ENCODE measurements at regions of chr15 and their contacts with region 1.

Region 1: DNA sequence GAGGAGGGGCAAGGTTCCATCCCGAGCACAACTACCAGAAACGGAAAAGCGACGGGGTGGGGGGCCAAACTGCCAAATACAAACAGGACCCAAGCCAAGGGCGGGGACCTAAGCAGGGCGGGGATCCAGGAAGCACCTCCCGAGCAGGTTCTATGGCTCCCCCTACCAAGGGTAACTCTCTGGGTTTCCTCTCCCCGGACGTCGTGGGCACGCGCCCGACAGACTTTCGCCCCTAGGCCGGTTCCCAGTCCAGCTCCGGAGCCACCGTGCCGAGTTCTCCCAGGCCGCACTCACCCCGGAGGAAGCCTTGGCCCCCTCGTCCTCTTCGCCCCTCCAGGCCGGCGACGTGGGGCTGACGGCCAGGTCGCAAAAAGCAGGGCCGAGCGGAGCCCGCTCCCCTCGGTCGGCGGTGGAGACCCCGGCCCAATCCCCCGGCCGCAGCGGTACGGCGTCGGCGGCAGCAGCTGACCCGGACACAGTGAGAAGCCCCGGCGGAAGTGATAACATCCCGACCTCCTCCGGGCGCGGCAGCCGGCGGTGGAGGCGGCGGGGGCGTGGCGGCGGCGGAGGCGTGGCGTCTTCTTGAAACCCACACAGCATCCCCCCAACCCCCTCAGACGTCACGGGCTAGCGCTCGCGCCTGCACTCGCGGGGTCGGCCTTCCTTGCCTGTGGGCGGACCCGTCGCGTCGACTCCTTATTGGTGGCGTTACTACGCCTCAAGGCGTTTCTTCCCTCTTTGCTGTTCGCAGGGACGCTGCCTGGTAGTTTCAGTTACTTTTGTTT is at the start of gene BNIP2:
- DNase-seq: peak; percentile 97
- ATAC-seq: peak; percentile 87
- H3K4me3 Mint-ChIP-seq: peak within 1 kb of the TSS; percentile 92
- H3K27ac Mint-ChIP-seq: peak within 1 kb of the TSS; percentile 96
- H3K4me1 Mint-ChIP-seq: peaks cover 52% of the 10 kb centered on the region
- H3K27me3 Mint-ChIP-seq: no peaks in the 10 kb centered on the region
- CTCF ChIP-seq: no peak
- total RNA-seq, gene BNIP2: 80.1 and 82.9 TPM in 2 replicates

Region 2: DNA sequence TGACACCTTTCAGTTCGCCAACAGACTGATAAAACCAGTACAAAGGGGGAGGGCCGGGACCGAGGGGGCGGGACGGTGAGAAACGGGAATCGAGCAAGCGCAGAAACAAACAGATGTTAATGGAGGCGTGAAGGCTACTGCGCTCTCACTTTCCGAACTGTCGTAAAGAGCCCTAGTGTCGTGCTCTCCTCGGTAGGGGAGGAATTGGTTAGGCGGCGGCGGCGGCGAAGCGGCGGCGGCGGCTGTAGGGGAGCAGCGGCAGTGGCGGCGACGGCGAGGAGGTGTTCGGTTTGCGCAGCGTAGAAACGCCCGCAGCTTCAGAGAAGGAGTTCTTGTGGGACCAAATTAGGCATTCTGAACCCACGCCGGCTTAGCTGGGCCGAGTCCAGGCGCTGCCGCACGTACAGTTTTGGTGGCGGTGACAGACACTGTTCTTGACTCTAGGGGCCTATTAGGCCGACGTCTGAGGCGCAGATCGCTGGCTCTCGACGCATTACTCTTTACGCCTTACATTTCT is 701.5 kb before region 1 on chr15 and contains the start of gene RNF111:
- CTCF ChIA-PET with region 1: no interaction called
- POLR2A ChIA-PET with region 1: interaction called, 3 read pairs
- intact Hi-C with region 1: loop called (anchors 2 kb)
- DNase-seq: peak; percentile 78
- ATAC-seq: peak; percentile 91
- H3K4me3 Mint-ChIP-seq: peak within 1 kb of the TSS; percentile 95
- H3K27ac Mint-ChIP-seq: peak within 1 kb of the TSS; percentile 94
- H3K4me1 Mint-ChIP-seq: peaks cover 45% of the 10 kb centered on the region
- H3K27me3 Mint-ChIP-seq: no peaks in the 10 kb centered on the region
- CTCF ChIP-seq: no peak
- total RNA-seq, gene RNF111: 52.5 and 55.8 TPM in 2 replicates

Region 3: DNA sequence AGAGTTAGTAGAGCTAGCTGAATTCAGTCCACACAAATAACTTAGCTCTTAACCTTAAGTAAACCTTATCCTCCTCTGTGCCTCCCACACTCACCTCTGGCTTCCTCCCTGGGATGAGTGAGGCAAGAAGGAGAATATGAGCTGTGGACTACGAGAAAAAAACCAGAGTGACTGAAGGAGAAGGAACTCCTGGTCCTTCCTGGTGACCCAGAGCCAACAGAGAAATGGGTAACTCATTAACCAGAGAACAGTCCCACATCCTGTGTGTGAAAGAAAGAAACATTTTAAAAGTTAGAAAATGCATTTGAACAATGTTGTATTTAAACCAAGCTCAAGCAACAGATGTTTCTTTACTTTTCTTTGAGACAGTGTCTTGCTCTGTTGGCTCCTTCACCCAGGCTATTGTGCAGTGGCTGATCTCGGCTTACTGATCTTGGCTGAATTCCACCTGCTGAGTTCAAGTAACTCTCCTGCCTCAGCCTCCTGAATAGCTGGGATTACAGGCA is 278.6 kb before region 1 on chr15:
- CTCF ChIA-PET with region 1: no interaction called
- POLR2A ChIA-PET with region 1: no interaction called
- intact Hi-C with region 1: loop called (anchors 2 kb)
- DNase-seq: no peak
- ATAC-seq: no peak
- H3K4me3 Mint-ChIP-seq: peak overlapping the region; percentile 73
- H3K27ac Mint-ChIP-seq: peak overlapping the region; percentile 98
- H3K4me1 Mint-ChIP-seq: peaks cover 84% of the 10 kb centered on the region
- H3K27me3 Mint-ChIP-seq: no peaks in the 10 kb centered on the region
- CTCF ChIP-seq: no peak

Region 4: DNA sequence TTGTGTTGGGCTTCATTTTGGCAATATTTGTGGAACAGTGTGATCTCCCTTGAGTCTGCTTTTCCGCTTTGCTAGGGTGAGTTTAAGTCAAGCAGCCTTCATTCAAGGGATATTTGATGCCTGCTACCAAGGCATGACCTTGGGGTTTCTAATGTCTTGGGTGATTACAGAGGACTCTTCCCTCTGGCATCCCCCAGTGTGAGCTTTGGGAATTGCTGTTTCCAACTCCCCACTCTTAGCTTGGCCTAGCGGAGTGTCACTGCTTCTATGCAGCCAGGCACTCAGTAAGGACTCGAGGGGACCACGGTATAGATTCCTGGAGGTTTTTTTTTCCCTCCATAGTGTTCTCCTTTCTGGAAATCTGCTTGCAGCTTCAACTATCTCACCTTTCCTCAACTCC is 56.3 kb before region 1 on chr15:
- CTCF ChIA-PET with region 1: no interaction called
- POLR2A ChIA-PET with region 1: no interaction called
- intact Hi-C with region 1: no loop called
- DNase-seq: no peak
- ATAC-seq: no peak
- H3K4me3 Mint-ChIP-seq: no peak overlapping the region
- H3K27ac Mint-ChIP-seq: no peak overlapping the region
- H3K4me1 Mint-ChIP-seq: no peaks in the 10 kb centered on the region
- H3K27me3 Mint-ChIP-seq: no peaks in the 10 kb centered on the region
- CTCF ChIP-seq: no peak

Region 5: GRCh38 chr15:59917504-59918157 is 228.6 kb after region 1 on chr15:
- CTCF ChIA-PET with region 1: interaction called, 3 read pairs
- POLR2A ChIA-PET with region 1: no interaction called
- intact Hi-C with region 1: loop called (anchors 1 kb)
- DNase-seq: peak; percentile 17
- ATAC-seq: peak; percentile 62
- H3K4me3 Mint-ChIP-seq: no peak overlapping the region
- H3K27ac Mint-ChIP-seq: no peak overlapping the region
- H3K4me1 Mint-ChIP-seq: no peaks in the 10 kb centered on the region
- H3K27me3 Mint-ChIP-seq: peaks cover 3% of the 10 kb centered on the region
- CTCF ChIP-seq: no peak

Region 6: GRCh38 chr15:60397772-60398445 is 708.9 kb after region 1 on chr15 and contains the start of gene ANXA2:
- CTCF ChIA-PET with region 1: no interaction called
- POLR2A ChIA-PET with region 1: interaction called, 11 read pairs
- intact Hi-C with region 1: loop called (anchors 1 kb)
- DNase-seq: peak; percentile 76
- ATAC-seq: peak; percentile 75
- H3K4me3 Mint-ChIP-seq: peak within 1 kb of the TSS; percentile 96
- H3K27ac Mint-ChIP-seq: peak within 1 kb of the TSS; percentile 95
- H3K4me1 Mint-ChIP-seq: peaks cover 42% of the 10 kb centered on the region
- H3K27me3 Mint-ChIP-seq: no peaks in the 10 kb centered on the region
- CTCF ChIP-seq: no peak
- total RNA-seq, gene ANXA2: 218 and 231 TPM in 2 replicates

Region 7: GRCh38 chr15:60414016-60414682 is 725.1 kb after region 1 on chr15:
- CTCF ChIA-PET with region 1: no interaction called
- POLR2A ChIA-PET with region 1: no interaction called
- intact Hi-C with region 1: no loop called
- DNase-seq: no peak
- ATAC-seq: no peak
- H3K4me3 Mint-ChIP-seq: no peak overlapping the region
- H3K27ac Mint-ChIP-seq: no peak overlapping the region
- H3K4me1 Mint-ChIP-seq: peaks cover 7% of the 10 kb centered on the region
- H3K27me3 Mint-ChIP-seq: no peaks in the 10 kb centered on the region
- CTCF ChIP-seq: no peak

Region 8: GRCh38 chr15:60751985-60752952 is 1063.2 kb after region 1 on chr15:
- CTCF ChIA-PET with region 1: no interaction called
- POLR2A ChIA-PET with region 1: no interaction called
- intact Hi-C with region 1: no loop called
- DNase-seq: no peak
- ATAC-seq: no peak
- H3K4me3 Mint-ChIP-seq: no peak overlapping the region
- H3K27ac Mint-ChIP-seq: no peak overlapping the region
- H3K4me1 Mint-ChIP-seq: no peaks in the 10 kb centered on the region
- H3K27me3 Mint-ChIP-seq: peaks cover 2% of the 10 kb centered on the region
- CTCF ChIP-seq: no peak

Measured in activated B cell treated with CpG ODN at 0.5 μM for 24 hours (primary cell).